GM18951 (cell line): ENCODE measurements at regions of chr17 and their contacts with region 1.

Region 1: DNA sequence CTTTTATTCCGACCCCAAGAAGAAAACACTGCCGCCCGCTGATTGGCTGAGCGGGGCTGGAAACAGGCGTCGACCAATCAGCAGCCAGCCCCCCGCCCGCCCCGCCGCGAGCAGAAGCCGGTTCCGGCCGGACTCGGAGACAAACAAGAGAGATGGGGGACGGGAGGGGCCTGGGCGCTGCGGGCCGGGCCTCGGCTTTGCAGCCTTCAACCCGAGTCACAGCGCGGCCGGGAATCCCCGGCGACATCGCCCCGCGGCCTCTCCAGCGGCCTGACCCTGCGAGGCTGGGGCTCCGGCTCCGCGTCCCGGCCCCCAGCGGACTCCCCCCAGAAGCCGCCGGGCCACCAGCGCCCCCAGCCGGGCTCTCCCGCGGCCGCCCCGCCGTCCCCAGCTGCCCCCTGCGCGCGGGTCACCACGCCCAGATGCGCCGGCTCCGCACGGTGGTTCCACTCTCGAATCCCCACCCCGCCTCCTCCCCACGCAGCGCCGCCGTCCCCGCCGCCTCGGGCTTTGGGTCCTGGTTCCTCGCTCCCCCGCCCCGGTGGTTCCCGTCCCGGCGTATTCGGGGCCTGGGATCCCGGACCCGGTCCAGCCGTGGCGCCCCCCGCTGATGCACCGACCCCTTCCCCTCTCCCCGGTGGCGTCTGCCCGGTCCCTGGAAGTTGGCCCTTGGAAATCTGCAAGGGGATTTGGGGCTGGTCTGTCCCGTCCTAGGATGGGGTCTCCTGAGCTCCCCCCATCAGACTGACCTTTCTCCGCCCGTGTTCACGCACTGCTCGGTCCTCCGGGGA is 417 bp upstream of the SLC43A2 start:
- POLR2A ChIP-seq: peak; percentile 54

Region 2: DNA sequence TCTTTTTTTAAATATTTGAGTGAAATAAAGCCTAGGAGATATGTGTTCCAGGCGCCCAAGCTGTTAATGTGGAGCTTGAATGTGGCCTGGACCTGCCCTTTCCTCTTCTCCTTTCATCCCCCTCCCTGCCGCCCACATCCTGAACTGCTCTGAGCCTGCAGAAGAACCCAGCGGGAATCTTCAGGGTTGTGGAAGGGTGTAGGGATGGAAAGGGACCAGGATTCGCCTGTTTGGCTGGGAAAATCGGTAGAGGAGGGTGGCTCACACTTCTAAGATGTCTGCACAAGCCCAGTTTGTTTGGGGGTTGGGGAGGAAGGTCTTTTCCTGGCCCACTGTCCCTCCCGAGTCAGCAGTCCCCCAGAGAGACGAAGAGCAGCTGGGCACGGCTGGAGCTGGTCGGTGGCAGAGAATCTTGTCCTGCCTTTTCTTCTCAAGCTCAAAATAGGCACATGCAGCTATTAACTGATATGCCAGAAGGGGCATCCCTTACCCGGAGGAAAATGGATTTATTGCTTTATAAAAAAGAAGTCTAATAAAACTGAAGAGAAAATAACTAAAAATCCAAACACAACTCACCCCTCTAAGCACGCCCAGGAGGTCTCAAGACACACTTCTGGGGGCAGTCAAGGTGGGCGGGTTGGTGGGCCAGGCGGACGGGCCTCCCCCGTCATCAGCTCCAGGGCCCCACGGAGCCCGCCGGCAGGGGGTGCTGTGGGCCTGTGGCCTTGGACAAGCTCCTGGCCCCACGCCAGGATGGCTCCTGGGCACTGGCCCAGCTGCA is 54.9 kb before region 1 on chr17:
- in situ Hi-C with region 1: loop called (anchors 10 kb)
- POLR2A ChIP-seq: peak; percentile 34

Region 3: GRCh38 chr17:1590031-1590748 is 38.9 kb before region 1 on chr17:
- in situ Hi-C with region 1: loop called (anchors 5 kb)
- POLR2A ChIP-seq: no peak

Region 4: GRCh38 chr17:1813088-1813487 is 184.0 kb after region 1 on chr17:
- in situ Hi-C with region 1: no loop called
- POLR2A ChIP-seq: no peak